Activated B cell treated with CpG ODN at 0.5 μM for 24 hours (primary cell): ENCODE measurements at regions of chr7 and their contacts with region 1.

Region 1: DNA sequence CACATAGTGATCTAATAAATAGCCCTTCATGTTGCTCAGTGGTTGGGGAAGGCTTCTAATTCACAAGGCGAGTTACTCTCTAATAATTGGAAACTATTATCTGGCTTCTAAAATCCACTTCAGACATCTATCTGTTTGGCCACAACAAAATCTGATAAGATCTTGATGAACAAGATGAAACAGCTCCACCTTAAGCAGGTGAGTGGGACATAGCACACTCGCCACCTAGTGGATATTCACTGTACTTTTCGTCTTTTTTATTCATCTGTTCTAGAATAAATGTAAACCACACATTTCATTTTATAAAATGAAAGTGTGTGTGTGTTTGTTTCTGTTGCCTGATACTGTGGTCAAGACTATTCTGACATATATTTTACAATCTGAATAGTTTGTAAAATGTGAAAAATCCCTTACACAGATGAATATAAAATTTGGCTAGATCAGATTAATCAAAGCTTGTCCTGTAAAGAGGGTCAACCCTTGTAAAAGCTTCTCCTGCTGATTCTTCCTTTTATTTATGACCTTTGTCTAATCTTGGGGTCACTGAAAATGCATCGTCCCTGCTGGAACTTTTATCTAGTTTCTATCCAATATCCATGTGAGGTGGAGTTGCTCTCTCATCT is 26.5 kb upstream of the CNTNAP2 start:
- DNase-seq: no peak
- ATAC-seq: peak; percentile 56
- H3K4me3 Mint-ChIP-seq: no peak overlapping the region
- H3K27ac Mint-ChIP-seq: no peak overlapping the region
- H3K4me1 Mint-ChIP-seq: no peaks in the 10 kb centered on the region
- H3K27me3 Mint-ChIP-seq: no peaks in the 10 kb centered on the region
- CTCF ChIP-seq: no peak

Region 2: DNA sequence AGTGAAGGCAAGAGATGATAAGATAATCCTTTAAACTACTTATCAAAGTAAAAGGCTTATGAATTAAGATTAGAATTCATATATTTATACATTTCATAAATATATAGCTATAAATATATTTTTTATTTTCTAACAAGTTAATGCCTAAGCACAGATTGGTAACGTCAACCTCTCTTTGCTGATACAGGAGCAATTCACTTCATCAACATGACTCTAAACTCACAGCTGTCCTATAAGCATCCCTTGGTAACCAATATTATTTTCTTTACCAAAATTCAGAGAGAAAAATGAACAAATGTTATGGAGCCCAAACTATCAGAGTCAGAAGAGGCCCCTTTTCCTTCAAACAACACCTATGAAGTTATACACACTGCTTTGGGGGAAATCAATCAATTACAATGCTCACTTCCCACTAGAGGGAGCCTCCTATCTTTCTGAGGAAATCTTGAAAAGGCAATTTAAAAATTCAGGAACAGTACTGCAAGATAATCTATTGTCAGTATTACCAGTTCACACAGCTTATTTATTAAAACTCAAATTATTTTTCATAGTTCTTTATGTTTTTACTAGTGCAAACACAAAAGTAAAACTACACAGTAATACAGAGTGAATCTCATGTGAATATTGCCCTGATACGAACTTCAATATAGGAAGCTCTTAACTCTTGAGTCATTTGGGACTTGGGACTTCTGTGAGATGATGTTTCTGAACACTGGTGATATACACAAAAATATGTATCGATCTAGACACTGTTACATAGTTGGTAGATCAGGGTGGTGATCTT is 1635.7 kb before region 1 on chr7:
- CTCF ChIA-PET with region 1: no interaction called
- POLR2A ChIA-PET with region 1: no interaction called
- intact Hi-C with region 1: loop called (anchors 10 kb)
- DNase-seq: no peak
- ATAC-seq: no peak
- H3K4me3 Mint-ChIP-seq: no peak overlapping the region
- H3K27ac Mint-ChIP-seq: no peak overlapping the region
- H3K4me1 Mint-ChIP-seq: peaks cover 3% of the 10 kb centered on the region
- H3K27me3 Mint-ChIP-seq: no peaks in the 10 kb centered on the region
- CTCF ChIP-seq: no peak

Region 3: DNA sequence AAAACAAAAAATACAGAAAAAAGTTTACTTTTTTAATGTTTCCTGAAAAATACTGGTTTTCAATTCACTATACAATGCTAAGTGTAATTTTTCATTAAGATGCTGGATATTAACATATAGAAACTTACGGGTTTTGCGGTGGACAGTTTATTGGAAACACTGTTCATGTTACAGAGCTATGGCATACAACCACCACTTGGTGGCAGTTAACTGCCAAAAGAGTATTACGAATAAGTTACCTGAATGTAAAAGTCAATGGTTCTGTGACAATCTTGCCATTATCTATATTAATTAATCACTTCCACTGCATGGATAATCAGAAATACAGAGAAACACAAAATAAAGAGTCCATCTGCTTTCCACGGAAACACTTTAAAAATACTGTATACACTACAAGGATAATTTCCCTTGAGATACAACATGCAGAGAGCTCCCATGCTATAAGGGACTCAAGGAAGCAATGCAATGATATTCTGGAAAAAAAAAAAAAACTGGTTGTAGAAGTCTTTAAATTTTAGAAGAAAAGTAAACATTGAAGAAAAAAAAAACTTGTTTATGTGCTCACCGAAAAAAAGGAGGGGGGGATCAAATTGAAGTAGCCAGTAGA is 1351.3 kb before region 1 on chr7:
- CTCF ChIA-PET with region 1: interaction called, 3 read pairs
- POLR2A ChIA-PET with region 1: no interaction called
- intact Hi-C with region 1: loop called (anchors 2 kb)
- DNase-seq: no peak
- ATAC-seq: peak; percentile 52
- H3K4me3 Mint-ChIP-seq: no peak overlapping the region
- H3K27ac Mint-ChIP-seq: no peak overlapping the region
- H3K4me1 Mint-ChIP-seq: peaks cover 2% of the 10 kb centered on the region
- H3K27me3 Mint-ChIP-seq: no peaks in the 10 kb centered on the region
- CTCF ChIP-seq: peak; percentile 68

Region 4: DNA sequence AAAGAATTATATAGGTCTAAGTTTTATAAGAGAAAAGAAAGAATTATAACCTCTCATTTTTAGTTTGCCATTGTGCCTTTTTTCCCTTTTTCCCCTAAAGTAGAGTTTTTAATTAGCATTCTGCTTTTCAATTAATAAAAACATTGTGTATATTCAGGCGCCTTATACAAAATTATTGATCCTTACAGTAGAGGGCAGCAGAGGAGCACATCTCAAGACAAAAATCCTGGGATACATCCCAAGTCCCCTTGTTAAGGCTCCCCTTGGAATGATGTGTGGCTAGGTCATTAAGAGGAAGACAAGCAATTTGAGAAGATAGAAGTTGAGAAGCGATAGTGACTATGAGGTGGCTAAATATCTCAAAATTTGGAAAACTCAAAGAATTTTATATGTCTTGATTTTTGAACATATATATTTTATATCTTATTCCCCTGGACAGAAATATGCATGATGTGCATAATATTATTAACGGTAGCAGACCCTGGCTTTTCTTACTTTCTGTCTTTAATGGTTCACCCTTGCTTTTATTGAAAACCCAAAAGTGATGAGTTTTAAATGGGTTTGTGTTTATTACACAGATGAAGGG is 1235.2 kb before region 1 on chr7:
- CTCF ChIA-PET with region 1: no interaction called
- POLR2A ChIA-PET with region 1: no interaction called
- intact Hi-C with region 1: loop called (anchors 2 kb)
- DNase-seq: no peak
- ATAC-seq: no peak
- H3K4me3 Mint-ChIP-seq: no peak overlapping the region
- H3K27ac Mint-ChIP-seq: no peak overlapping the region
- H3K4me1 Mint-ChIP-seq: no peaks in the 10 kb centered on the region
- H3K27me3 Mint-ChIP-seq: peaks cover 11% of the 10 kb centered on the region
- CTCF ChIP-seq: no peak

Region 5: GRCh38 chr7:145036604-145037405 is 1053.3 kb before region 1 on chr7:
- CTCF ChIA-PET with region 1: interaction called, 31 read pairs
- POLR2A ChIA-PET with region 1: no interaction called
- intact Hi-C with region 1: loop called (anchors 1 kb)
- DNase-seq: no peak
- ATAC-seq: no peak
- H3K4me3 Mint-ChIP-seq: no peak overlapping the region
- H3K27ac Mint-ChIP-seq: no peak overlapping the region
- H3K4me1 Mint-ChIP-seq: peaks cover 1% of the 10 kb centered on the region
- H3K27me3 Mint-ChIP-seq: peaks cover 2% of the 10 kb centered on the region
- CTCF ChIP-seq: peak; percentile 56

Region 6: GRCh38 chr7:145655666-145656065 is 434.5 kb before region 1 on chr7:
- CTCF ChIA-PET with region 1: no interaction called
- POLR2A ChIA-PET with region 1: no interaction called
- intact Hi-C with region 1: loop called (anchors 1 kb)
- DNase-seq: no peak
- ATAC-seq: no peak
- H3K4me3 Mint-ChIP-seq: no peak overlapping the region
- H3K27ac Mint-ChIP-seq: no peak overlapping the region
- H3K4me1 Mint-ChIP-seq: no peaks in the 10 kb centered on the region
- H3K27me3 Mint-ChIP-seq: no peaks in the 10 kb centered on the region
- CTCF ChIP-seq: no peak

Region 7: GRCh38 chr7:145884716-145885514 is 205.2 kb before region 1 on chr7:
- CTCF ChIA-PET with region 1: interaction called, 7 read pairs
- POLR2A ChIA-PET with region 1: no interaction called
- intact Hi-C with region 1: loop called (anchors 1 kb)
- DNase-seq: no peak
- ATAC-seq: peak; percentile 62
- H3K4me3 Mint-ChIP-seq: no peak overlapping the region
- H3K27ac Mint-ChIP-seq: no peak overlapping the region
- H3K4me1 Mint-ChIP-seq: peaks cover 5% of the 10 kb centered on the region
- H3K27me3 Mint-ChIP-seq: no peaks in the 10 kb centered on the region
- CTCF ChIP-seq: no peak

Region 8: GRCh38 chr7:146805082-146805481 is 714.9 kb after region 1 on chr7:
- CTCF ChIA-PET with region 1: no interaction called
- POLR2A ChIA-PET with region 1: no interaction called
- intact Hi-C with region 1: no loop called
- DNase-seq: no peak
- ATAC-seq: no peak
- H3K4me3 Mint-ChIP-seq: no peak overlapping the region
- H3K27ac Mint-ChIP-seq: no peak overlapping the region
- H3K4me1 Mint-ChIP-seq: no peaks in the 10 kb centered on the region
- H3K27me3 Mint-ChIP-seq: no peaks in the 10 kb centered on the region
- CTCF ChIP-seq: no peak